Activated CD4-positive, alpha-beta memory T cell treated with anti-CD3 and anti-CD28 coated beads, Interleukin-2, amount 10 ng/mL, durations not matched to agents 7 days and 5 days (primary cell): ENCODE measurements at regions of chr9 and their contacts with region 1.

Region 1: DNA sequence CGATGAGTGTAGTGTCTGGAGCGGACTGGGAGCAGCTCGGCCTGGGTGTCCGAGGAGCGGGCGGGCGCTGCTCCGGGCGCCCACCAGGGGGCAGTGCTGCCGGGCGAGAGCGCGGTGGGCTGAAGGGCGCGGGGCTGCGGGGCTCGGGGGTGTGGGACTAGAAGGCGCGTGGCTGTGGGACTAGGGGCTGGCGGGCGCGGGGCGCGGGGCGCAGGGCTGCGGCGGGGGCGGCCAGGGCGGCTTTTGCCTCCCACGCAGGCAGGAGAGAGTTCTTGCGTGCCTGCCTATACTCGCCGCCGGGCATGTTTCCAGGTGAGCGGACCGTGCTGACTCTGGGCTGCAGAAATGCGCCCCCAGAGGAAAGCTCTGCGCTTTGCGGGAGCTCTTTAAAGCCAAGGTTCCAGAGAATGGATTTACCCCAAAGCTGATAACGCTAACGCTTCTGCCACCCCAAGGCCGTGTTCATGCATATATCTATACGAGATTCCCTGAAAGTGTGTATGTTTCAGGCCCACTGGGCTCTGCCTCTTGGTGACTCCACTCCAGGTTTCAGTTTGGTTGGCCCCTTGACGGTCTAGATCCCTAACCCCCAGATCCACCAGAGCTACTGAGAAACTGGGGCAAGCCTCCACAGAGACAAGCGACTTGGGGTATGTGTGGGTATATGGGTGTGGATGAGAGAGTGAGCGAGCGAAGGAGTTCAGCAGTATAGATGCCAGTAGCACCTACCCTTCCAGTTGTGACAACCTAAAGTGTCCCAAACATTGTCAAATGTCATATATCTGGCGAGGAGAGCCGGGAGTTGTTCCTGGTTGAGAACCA is 56.2 kb downstream of the ACER2 start:
- DNase-seq: peak; percentile 66
- H3K4me3 Mint-ChIP-seq: peak overlapping the region; percentile 72
- H3K27ac Mint-ChIP-seq: no peak overlapping the region
- H3K4me1 Mint-ChIP-seq: peaks cover 21% of the 10 kb centered on the region
- H3K27me3 Mint-ChIP-seq: no peaks in the 10 kb centered on the region

Region 2: DNA sequence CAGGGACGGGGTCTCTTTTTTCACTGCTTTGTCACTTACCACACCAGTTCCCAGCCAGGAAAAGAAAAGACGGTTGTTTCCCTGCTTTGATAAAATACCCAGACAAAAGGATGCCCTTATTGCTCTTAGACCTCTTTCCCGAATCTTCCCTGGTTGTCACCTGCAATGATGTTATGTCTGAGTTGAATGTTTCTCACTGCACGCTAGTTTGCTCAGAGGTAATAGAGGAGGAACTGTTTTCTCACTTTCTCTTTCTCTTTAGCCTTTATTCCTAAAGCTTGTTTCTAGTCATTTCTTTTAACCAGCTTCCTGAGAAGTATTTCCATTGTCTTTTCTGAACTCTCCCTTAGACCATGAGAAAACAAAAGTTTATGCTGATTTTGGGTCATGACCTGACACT is 23.2 kb before region 1 on chr9:
- CTCF ChIA-PET with region 1: interaction called, 19 read pairs
- POLR2A ChIA-PET with region 1: interaction called, 3 read pairs
- DNase-seq: no peak
- H3K4me3 Mint-ChIP-seq: peak overlapping the region; percentile 57
- H3K27ac Mint-ChIP-seq: peak overlapping the region; percentile 31
- H3K4me1 Mint-ChIP-seq: peaks cover 20% of the 10 kb centered on the region
- H3K27me3 Mint-ChIP-seq: no peaks in the 10 kb centered on the region

Region 3: DNA sequence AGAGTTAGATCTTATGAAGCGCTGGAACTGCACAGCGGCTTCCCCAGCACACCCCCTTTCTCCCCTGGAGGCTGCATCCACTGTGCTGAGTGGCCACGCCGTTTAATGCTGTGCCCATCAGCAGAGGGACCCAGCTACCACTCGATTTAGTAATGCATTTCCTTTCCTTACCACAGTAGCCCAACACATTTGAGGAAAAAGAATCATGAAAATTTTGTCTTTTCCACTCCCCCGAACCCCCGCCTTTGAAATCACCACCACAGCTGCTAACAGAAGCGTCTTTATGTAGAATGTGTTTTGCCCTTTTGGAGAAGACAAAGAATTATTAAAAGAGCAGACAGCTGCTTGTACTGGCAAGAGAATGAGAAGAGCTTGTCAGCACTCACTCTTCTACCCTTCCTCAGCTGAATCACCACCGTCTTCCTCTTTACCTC is 17.0 kb after region 1 on chr9:
- CTCF ChIA-PET with region 1: interaction called, 20 read pairs
- POLR2A ChIA-PET with region 1: no interaction called
- DNase-seq: no peak
- H3K4me3 Mint-ChIP-seq: no peak overlapping the region
- H3K27ac Mint-ChIP-seq: no peak overlapping the region
- H3K4me1 Mint-ChIP-seq: no peaks in the 10 kb centered on the region
- H3K27me3 Mint-ChIP-seq: peaks cover 10% of the 10 kb centered on the region

Region 4: DNA sequence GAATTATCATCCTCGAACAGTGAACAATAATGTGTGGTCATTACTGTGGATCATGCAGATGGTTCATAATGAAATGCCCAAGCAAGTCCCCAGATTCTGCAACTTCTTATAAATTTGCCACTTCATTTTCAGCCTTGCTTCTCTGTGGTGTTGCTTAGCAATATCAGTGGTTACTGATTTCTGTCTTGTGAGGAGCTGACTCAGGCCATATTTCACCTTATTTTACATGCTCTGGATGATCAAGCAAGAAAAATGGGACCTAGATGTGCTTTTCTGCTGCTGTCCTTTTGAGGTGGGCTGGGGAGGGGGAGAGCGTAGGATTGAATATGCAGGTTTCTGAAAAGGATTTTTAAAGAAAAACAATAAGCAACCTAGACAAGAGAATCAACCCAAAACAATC is 135.6 kb after region 1 on chr9:
- CTCF ChIA-PET with region 1: no interaction called
- POLR2A ChIA-PET with region 1: no interaction called
- DNase-seq: no peak
- H3K4me3 Mint-ChIP-seq: no peak overlapping the region
- H3K27ac Mint-ChIP-seq: no peak overlapping the region
- H3K4me1 Mint-ChIP-seq: no peaks in the 10 kb centered on the region
- H3K27me3 Mint-ChIP-seq: peaks cover 7% of the 10 kb centered on the region

Region 5: GRCh38 chr9:20022410-20022809 is 557.4 kb after region 1 on chr9:
- CTCF ChIA-PET with region 1: no interaction called
- POLR2A ChIA-PET with region 1: no interaction called
- DNase-seq: no peak
- H3K4me3 Mint-ChIP-seq: no peak overlapping the region
- H3K27ac Mint-ChIP-seq: no peak overlapping the region
- H3K4me1 Mint-ChIP-seq: no peaks in the 10 kb centered on the region
- H3K27me3 Mint-ChIP-seq: no peaks in the 10 kb centered on the region